ENCODE measurements at regions of chr5 and their contacts with region 1.

Region 1: GRCh38 chr5:180126726-180127681 is 55.4 kb upstream of the RNF130 start:
- DNase-seq: peak; percentile 45 to 82 (median 74)
- ATAC-seq: peak; percentile 84
- H3K4me3 ChIP-seq: peak overlapping the region; percentile 10; the same call in 1 of the 2 replicates
- H3K27ac ChIP-seq: no peak overlapping the region
- H3K4me1 ChIP-seq: peaks cover 0 to 24% of the 10 kb centered on the region in 2 experiments; a peak in 3 of 5 replicates
- H3K27me3 ChIP-seq: peaks cover 30 to 75% of the 10 kb centered on the region in 2 experiments; a peak in 4 of 5 replicates
- CTCF ChIP-seq: peak; percentile 71 to 85 (median 75)
- EP300 ChIP-seq: no peak
- POLR2A ChIP-seq: no peak
- RAD21 ChIP-seq: peak; percentile 58 to 65

Region 2: GRCh38 chr5:180047667-180048066 is 79.3 kb before region 1 on chr5:
- CTCF ChIA-PET with region 1: no interaction called
- POLR2A ChIA-PET with region 1: no interaction called
- in situ Hi-C with region 1: no loop called
- intact Hi-C with region 1: no loop called
- DNase-seq: no peak
- ATAC-seq: no peak
- H3K4me3 ChIP-seq: no peak overlapping the region
- H3K27ac ChIP-seq: no peak overlapping the region
- H3K4me1 ChIP-seq: peaks cover 0 to 26% of the 10 kb centered on the region in 2 experiments; a peak in 3 of 5 replicates
- H3K27me3 ChIP-seq: no peaks in the 10 kb centered on the region
- CTCF ChIP-seq: no peak
- EP300 ChIP-seq: no peak
- POLR2A ChIP-seq: no peak
- RAD21 ChIP-seq: no peak

Region 3: GRCh38 chr5:180140079-180140554 is 13.1 kb after region 1 on chr5:
- CTCF ChIA-PET with region 1: no interaction called
- POLR2A ChIA-PET with region 1: no interaction called
- in situ Hi-C with region 1: no loop called
- intact Hi-C with region 1: no loop called
- DNase-seq: no peak
- ATAC-seq: no peak
- H3K4me3 ChIP-seq: no peak overlapping the region
- H3K27ac ChIP-seq: no peak overlapping the region
- H3K4me1 ChIP-seq: peaks cover 0 to 20% of the 10 kb centered on the region in 2 experiments; a peak in 2 of 5 replicates
- H3K27me3 ChIP-seq: peaks cover 9 to 59% of the 10 kb centered on the region in 2 experiments; a peak in 4 of 5 replicates
- CTCF ChIP-seq: no peak
- EP300 ChIP-seq: no peak
- POLR2A ChIP-seq: no peak
- RAD21 ChIP-seq: no peak

Region 4: GRCh38 chr5:180470966-180471582 is 344.1 kb after region 1 on chr5:
- CTCF ChIA-PET with region 1: no interaction called
- POLR2A ChIA-PET with region 1: no interaction called
- in situ Hi-C with region 1: no loop called
- intact Hi-C with region 1: loop called (anchors 5 kb)
- DNase-seq: peak; percentile 72 to 79 (median 76)
- ATAC-seq: peak; percentile 89
- H3K4me3 ChIP-seq: no peak overlapping the region
- H3K27ac ChIP-seq: no peak overlapping the region
- H3K4me1 ChIP-seq: peaks cover 0 to 11% of the 10 kb centered on the region in 2 experiments; a peak in 2 of 5 replicates
- H3K27me3 ChIP-seq: peaks cover 6 to 66% of the 10 kb centered on the region in 2 experiments
- CTCF ChIP-seq: peak; percentile 81 to 89 (median 89)
- EP300 ChIP-seq: no peak
- POLR2A ChIP-seq: no peak
- RAD21 ChIP-seq: peak; percentile 53 to 80

Measured in K562 (cell line).